ENCODE measurements at regions of chr12 and their contacts with region 1.

Region 1: DNA sequence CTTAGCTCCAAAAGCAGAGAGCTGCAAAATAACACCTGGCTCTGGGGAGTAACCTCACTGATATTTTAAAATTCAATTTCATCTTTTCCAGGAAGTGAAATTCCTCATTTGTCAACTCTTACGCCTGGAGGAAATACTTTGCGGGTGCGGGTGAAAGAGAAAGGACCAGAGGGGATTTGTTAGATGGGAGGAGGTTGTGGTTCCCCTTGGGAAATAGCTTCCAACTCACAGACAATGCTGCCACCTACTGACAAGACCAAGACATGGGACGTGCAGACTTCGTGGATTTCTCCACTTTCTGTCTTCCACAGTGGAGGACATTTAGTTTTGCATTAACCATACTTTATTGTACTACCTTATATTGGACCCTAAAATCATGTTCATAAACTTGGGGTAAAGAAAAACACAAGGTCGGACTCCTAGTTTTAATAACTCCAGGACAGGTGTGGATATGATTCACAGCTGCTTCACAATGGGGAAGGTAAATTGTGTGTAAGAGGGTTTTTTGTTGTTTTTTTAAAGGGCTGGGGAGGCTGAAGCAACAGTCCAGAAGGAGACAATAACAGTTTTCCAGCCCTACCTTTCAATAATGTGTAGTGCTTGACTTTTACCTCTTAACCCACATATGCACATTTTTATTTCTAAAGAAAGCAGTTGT is 10.8 kb downstream of the FBXL14 start:
- DNase-seq: peak; percentile 81
- H3K4me3 ChIP-seq: peak overlapping the region; percentile 7 to 26; a peak in 2 of 4 replicates
- H3K27ac ChIP-seq: peak overlapping the region in 1 of 2 experiments; percentile 33; a peak in 2 of 4 replicates
- H3K4me1 ChIP-seq: peaks cover 0 to 34% of the 10 kb centered on the region in 2 experiments; a peak in 3 of 4 replicates
- H3K27me3 ChIP-seq: no peaks in the 10 kb centered on the region
- CTCF ChIP-seq: peak; percentile 93
- EP300 ChIP-seq: no peak
- RAD21 ChIP-seq: peak; percentile 97

Region 2: DNA sequence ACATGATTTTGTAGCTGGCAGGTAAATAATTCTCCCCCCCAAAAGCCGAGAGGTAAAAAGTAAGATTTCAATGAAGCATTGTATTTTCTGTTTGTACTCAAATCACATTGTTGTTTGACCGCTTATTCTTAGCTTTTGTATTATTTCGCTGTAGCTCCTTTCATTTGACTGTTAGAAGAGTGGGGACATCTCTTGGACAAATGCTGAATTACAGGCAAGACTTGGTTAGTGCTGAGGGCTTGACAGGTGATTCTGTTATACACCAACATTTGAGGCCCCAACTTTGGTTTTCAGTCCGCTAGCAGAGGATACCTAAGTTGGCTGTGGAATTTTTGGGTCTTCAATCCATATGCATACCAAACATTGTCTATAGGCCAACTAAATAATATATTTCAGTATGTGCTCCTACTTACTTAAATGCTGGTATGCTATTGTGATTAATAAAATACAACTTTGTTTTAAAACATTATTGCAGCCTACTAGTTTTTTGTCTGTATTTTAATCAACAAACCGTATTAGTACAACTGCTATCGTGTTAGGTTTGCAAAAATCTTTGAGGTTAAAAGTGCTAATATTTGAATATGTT is 490.3 kb before region 1 on chr12:
- CTCF ChIA-PET with region 1: interaction called, 11 read pairs
- POLR2A ChIA-PET with region 1: no interaction called
- DNase-seq: peak; percentile 54
- H3K4me3 ChIP-seq: no peak overlapping the region; a peak in 1 of 4 replicates
- H3K27ac ChIP-seq: peak overlapping the region in 1 of 2 experiments; percentile 32; a peak in 1 of 4 replicates
- H3K4me1 ChIP-seq: peaks cover 0 to 8% of the 10 kb centered on the region in 2 experiments; a peak in 1 of 4 replicates
- H3K27me3 ChIP-seq: no peaks in the 10 kb centered on the region
- CTCF ChIP-seq: peak; percentile 82
- EP300 ChIP-seq: no peak
- RAD21 ChIP-seq: peak; percentile 91

Region 3: GRCh38 chr12:1147821-1148220 is 435.7 kb before region 1 on chr12:
- CTCF ChIA-PET with region 1: interaction called, 10 read pairs
- POLR2A ChIA-PET with region 1: no interaction called
- DNase-seq: no peak
- H3K4me3 ChIP-seq: no peak overlapping the region
- H3K27ac ChIP-seq: no peak overlapping the region
- H3K4me1 ChIP-seq: no peaks in the 10 kb centered on the region
- H3K27me3 ChIP-seq: no peaks in the 10 kb centered on the region
- CTCF ChIP-seq: no peak
- EP300 ChIP-seq: no peak
- RAD21 ChIP-seq: no peak

Region 4: GRCh38 chr12:1559676-1560091 is 23.9 kb before region 1 on chr12:
- CTCF ChIA-PET with region 1: interaction called, 10 read pairs
- POLR2A ChIA-PET with region 1: no interaction called
- DNase-seq: no peak
- H3K4me3 ChIP-seq: no peak overlapping the region
- H3K27ac ChIP-seq: no peak overlapping the region
- H3K4me1 ChIP-seq: peaks cover 0 to 12% of the 10 kb centered on the region in 2 experiments; a peak in 1 of 4 replicates
- H3K27me3 ChIP-seq: no peaks in the 10 kb centered on the region
- CTCF ChIP-seq: no peak
- EP300 ChIP-seq: no peak
- RAD21 ChIP-seq: no peak

Region 5: DNA sequence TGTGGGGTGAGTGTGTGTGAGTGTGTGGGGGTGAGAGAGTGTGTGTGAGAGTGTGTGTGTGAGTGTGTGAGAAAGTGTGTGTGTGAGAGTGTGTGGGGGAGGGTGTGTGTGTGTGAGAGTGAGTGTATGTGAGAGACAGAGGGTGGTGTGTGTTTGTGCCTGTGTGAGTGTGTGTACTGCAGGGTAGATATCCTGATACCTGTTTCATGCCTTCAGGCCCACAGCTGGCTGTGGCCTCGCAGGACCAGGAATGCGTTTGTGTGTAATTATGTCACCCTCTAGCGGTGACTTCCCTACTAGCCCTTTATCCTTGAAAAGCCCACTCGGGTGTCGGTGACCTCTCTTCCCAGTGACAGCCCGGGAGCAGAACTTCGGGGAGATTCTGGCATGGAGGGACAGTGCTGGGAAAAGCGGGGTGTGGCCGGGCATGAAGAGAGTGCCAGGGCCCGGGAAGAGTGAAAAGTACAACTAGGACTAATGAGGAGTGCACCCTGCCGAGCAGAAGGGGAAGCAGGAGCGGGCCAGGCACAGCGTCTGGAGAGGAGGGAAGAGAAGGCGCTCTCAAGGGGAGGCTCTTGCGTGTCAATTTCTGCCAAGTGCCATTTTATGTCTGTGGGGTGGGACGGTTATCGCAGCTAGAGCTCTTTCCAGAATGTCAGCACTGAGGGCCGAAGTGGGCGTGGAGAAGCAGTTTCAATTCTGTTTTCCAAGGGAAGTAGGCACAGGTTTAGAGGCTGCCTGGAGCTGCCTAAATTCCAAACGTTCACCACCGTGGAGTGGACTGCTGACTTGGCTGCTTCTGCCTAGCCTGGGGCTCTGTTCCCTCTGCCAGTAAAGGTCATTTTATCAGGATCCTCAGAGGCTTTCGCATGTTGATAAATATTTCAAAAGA is 21.8 kb after region 1 on chr12:
- CTCF ChIA-PET with region 1: interaction called, 33 read pairs
- POLR2A ChIA-PET with region 1: no interaction called
- DNase-seq: peak; percentile 79
- H3K4me3 ChIP-seq: peak overlapping the region; percentile 29 to 64
- H3K27ac ChIP-seq: peak overlapping the region; percentile 64 to 92
- H3K4me1 ChIP-seq: peaks cover 9 to 33% of the 10 kb centered on the region in 2 experiments; a peak in 3 of 4 replicates
- H3K27me3 ChIP-seq: no peaks in the 10 kb centered on the region
- CTCF ChIP-seq: peak; percentile 80
- EP300 ChIP-seq: 0 out of 4 replicates have a peak, but pooled peaks of 1 of the 2 experiments have one; percentile 27
- RAD21 ChIP-seq: peak; percentile 87

Measured in SK-N-SH (cell line).